K562 (cell line): ENCODE measurements at regions of chr19 and their contacts with region 1.

Region 1: DNA sequence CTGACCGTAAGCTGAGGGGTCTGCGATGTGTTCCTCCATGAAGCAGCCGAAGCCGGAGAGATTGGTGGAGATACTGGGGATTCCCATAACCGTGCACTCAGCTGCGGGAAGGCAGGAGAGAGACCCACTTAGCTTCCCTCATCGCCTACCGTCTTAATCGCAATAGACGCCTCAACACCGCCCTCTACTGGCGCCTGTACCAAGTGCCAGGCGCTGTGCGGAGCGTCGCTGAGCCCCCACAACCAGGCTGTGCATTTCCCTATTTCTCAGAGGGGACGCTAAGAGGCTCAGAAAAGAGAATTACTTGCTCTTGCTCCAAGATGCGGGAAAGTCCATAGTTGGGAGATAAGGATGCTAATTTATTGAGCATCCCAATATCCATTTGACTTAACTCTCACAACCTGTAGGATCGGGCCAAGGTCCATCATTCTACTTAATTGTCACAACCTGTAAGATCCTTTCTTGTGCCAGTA is 5.8 kb downstream of the FTL start:
- DNase-seq: peak; percentile 75 to 93 (median 80)
- ATAC-seq: peak; percentile 66
- H3K4me3 ChIP-seq: no peak overlapping the region
- H3K27ac ChIP-seq: peak overlapping the region; percentile 42; the same call in 2 of the 3 replicates
- H3K4me1 ChIP-seq: peaks cover 26 to 34% of the 10 kb centered on the region in 2 experiments
- H3K27me3 ChIP-seq: no peaks in the 10 kb centered on the region
- CTCF ChIP-seq: peak; percentile 94 to 98 (median 97)
- EP300 ChIP-seq: no peak
- POLR2A ChIP-seq: no peak
- RAD21 ChIP-seq: peak; percentile 92 to 96

Region 2: DNA sequence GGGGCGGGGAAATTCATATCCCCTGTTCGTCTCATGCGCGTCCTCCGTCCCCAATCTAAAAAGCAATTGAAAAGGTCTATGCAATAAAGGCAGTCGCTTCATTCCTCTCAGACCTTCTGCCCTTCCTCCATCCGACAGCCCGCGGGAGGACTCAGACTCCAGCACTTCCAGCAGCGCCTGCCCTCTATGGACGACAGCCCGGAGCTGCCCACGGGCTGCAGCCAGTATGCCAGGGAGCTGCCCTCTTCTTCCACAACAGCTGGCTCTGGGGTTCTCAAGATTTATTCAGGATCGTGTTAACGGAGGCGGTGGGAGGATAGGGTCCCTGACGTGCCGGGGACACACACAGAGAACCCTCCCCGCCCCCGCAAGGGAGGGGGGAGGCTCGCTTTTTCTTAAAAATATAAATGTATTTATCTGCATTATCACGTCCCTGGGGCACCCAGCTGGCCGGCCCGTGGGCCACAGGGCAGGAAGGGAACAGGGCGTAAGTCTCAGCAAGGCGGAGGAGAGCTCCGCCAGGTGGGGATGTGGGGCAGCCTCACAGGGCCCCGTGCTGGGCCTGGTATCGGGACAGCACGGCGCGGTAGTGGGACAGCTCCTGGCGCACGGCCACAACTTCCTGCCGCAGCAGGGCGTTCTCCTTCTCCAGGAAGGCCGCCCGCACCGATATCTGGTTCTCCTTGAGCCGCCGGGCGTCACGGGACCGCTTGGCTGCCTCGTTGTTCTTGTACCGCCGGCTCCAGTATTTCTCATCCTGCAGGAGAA is 340.5 kb before region 1 on chr19:
- CTCF ChIA-PET with region 1: no interaction called
- POLR2A ChIA-PET with region 1: no interaction called
- in situ Hi-C with region 1: no loop called
- intact Hi-C with region 1: no loop called
- DNase-seq: no peak
- ATAC-seq: no peak
- H3K4me3 ChIP-seq: no peak overlapping the region
- H3K27ac ChIP-seq: no peak overlapping the region
- H3K4me1 ChIP-seq: peaks cover 27 to 79% of the 10 kb centered on the region in 2 experiments
- H3K27me3 ChIP-seq: no peaks in the 10 kb centered on the region
- CTCF ChIP-seq: no peak
- EP300 ChIP-seq: no peak
- POLR2A ChIP-seq: no peak; the same call in 1 of the 2 replicates
- RAD21 ChIP-seq: no peak

Region 3: DNA sequence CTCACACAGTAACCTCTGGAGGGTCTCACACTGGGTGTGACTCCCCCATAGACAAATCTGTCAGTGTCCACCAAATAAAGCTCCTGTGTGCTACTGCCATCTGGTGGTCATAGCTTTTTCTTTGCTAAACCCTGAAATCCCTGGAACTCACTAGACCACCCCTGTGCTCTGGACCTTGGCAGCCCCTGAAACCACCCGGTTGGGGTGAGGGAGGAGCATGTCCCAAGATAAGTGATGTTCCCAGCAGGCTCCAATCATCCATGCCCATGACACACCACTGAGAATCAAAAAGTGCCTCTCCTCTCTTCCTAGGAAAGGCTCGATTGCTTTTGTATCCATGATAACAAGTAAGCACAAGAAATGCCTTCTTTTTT is 128.2 kb before region 1 on chr19:
- CTCF ChIA-PET with region 1: no interaction called
- POLR2A ChIA-PET with region 1: interaction called, 16 read pairs
- in situ Hi-C with region 1: no loop called
- intact Hi-C with region 1: loop called (anchors 1 kb)
- DNase-seq: peak; percentile 53 to 80 (median 64)
- ATAC-seq: peak; percentile 87
- H3K4me3 ChIP-seq: no peak overlapping the region
- H3K27ac ChIP-seq: no peak overlapping the region
- H3K4me1 ChIP-seq: peaks cover 6 to 11% of the 10 kb centered on the region in 2 experiments; a peak in 4 of 5 replicates
- H3K27me3 ChIP-seq: no peaks in the 10 kb centered on the region
- CTCF ChIP-seq: peak; percentile 73 to 90 (median 79)
- EP300 ChIP-seq: no peak
- POLR2A ChIP-seq: no peak
- RAD21 ChIP-seq: peak; percentile 64 to 78

Region 4: GRCh38 chr19:48993175-48994034 is 22.4 kb after region 1 on chr19 and contains the starts of genes GYS1 and RUVBL2:
- CTCF ChIA-PET with region 1: no interaction called
- POLR2A ChIA-PET with region 1: interaction called, 42 read pairs
- in situ Hi-C with region 1: no loop called
- intact Hi-C with region 1: no loop called
- DNase-seq: peak; percentile 98 to 100 (median 99)
- ATAC-seq: peak; percentile 95
- H3K4me3 ChIP-seq: peak within 1 kb of the TSS; percentile 87
- H3K27ac ChIP-seq: peak within 1 kb of the TSS; percentile 91
- H3K4me1 ChIP-seq: peaks cover 5 to 30% of the 10 kb centered on the region in 2 experiments; a peak in 4 of 5 replicates
- H3K27me3 ChIP-seq: no peaks in the 10 kb centered on the region
- CTCF ChIP-seq: peak; percentile 97 to 98 (median 98)
- EP300 ChIP-seq: peak; percentile 85
- POLR2A ChIP-seq: peak; percentile 96
- RAD21 ChIP-seq: peak; percentile 36 to 46
- polyA plus RNA-seq, gene GYS1: 1.9 to 2.2 TPM
- polyA plus RNA-seq, gene RUVBL2: 71.4 to 95.3 TPM

Region 5: GRCh38 chr19:49118565-49119410 is 147.8 kb after region 1 on chr19 and contains the start of gene C19orf73:
- CTCF ChIA-PET with region 1: no interaction called
- POLR2A ChIA-PET with region 1: no interaction called
- in situ Hi-C with region 1: no loop called
- intact Hi-C with region 1: no loop called
- DNase-seq: peak; percentile 96 to 99 (median 97)
- ATAC-seq: peak; percentile 89
- H3K4me3 ChIP-seq: peak within 1 kb of the TSS; percentile 53
- H3K27ac ChIP-seq: peak within 1 kb of the TSS; percentile 98
- H3K4me1 ChIP-seq: peaks cover 32 to 65% of the 10 kb centered on the region in 2 experiments
- H3K27me3 ChIP-seq: no peaks in the 10 kb centered on the region
- CTCF ChIP-seq: peak in 2 of 3 experiments; percentile 18 to 24; a peak in 2 of 6 replicates
- EP300 ChIP-seq: no peak
- POLR2A ChIP-seq: peak; percentile 79
- RAD21 ChIP-seq: no peak
- polyA plus RNA-seq, gene C19orf73: 0.08 to 0.32 TPM